ENCODE measurements at regions of chr2 and their contacts with region 1.

Region 1: DNA sequence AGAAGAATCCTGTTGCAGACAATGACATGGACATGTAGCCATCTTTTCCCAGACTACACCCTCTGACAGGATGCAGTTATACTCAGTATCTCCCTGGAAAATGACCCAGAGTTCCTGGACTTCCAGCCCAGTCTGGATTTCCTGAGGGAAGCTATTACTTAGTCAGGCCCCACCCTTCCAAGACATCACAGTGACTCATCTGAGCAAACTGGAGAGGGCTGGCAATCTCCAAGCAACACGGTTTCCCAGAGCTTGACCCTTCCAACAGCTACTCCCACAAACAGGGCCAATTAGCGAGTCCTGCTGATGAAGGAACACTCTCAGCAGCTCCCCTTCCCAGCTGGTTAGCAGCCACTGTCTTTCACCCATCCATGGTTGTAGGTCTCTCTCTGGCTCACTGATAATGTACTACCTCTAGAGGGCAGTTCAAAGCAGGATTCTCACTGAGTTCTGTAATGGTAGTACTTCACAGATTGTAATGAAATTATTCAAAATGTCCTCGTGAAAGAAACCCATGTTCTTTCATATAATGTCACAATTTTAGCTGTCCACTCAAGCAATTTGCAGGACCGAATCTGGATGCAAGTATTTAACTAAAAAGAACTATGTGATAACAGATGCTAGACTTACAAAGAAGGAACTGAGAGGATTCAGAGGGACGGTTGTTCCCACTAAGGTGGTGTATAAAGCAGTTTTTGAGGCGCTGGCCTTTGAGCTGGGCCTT is 110.2 kb downstream of the MDH1 start:
- DNase-seq: no peak
- H3K4me3 ChIP-seq: no peak overlapping the region
- H3K27ac ChIP-seq: peak overlapping the region; percentile 18 to 66 (median 46)
- H3K4me1 ChIP-seq: peaks cover 0 to 9% (median 6%) of the 10 kb centered on the region in 4 donors
- H3K27me3 ChIP-seq: no peaks in the 10 kb centered on the region
- CTCF ChIP-seq: peak; percentile 54 to 62 (median 61)
- EP300 ChIP-seq: no peak
- POLR2A ChIP-seq: no peak

Region 2: DNA sequence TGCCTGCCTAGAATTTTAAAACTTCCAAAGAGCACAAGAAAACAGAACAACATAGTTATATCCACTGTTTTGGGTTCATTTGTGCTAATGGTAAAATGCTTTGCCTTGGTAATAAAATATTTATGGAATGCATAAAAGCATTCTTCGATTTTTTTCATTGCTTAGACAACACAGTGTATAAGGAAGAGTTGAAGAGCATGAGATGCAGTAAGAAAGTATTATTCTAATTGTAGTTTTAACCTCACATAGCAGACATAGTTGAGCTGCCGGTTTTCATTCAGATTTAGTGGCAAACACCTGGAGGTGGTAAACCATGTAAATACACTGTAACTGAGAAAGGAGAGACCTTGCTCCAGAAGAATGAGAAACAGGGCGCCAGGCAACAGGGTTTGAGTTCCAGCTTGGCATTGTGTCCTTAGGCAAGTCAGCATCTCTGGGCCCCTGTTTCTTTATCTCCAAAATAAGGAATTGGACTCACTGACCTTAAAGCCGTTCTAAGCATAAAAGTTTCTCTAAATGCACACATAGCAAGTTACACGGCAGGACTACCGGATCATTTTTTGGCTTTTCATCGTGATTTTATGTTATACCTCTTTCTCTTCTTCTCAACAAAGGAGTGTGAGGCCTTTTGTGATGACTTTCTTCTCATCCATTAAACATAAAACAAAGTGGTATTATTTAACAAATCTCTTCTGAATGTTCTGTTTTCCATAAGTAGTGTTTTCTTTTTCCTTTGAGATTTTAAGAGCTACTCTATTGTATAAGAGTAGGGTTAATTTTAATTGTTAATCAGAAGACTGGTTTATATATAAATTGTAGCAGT is 150.6 kb after region 1 on chr2:
- intact Hi-C with region 1: loop called (anchors 10 kb)
- DNase-seq: no peak
- H3K4me3 ChIP-seq: no peak overlapping the region
- H3K27ac ChIP-seq: no peak overlapping the region
- H3K4me1 ChIP-seq: peaks cover 59 to 95% (median 80%) of the 10 kb centered on the region in 4 donors
- H3K27me3 ChIP-seq: no peaks in the 10 kb centered on the region
- CTCF ChIP-seq: no peak
- EP300 ChIP-seq: no peak
- POLR2A ChIP-seq: no peak